A673 (cell line): ENCODE measurements at regions of chr11 and their contacts with region 1.

Region 1: GRCh38 chr11:26297189-26297975 is 34.5 kb upstream of the ANO3 start:
- DNase-seq: peak; percentile 80
- H3K4me3 ChIP-seq: no peak overlapping the region
- H3K27ac ChIP-seq: no peak overlapping the region
- H3K4me1 ChIP-seq: no peaks in the 10 kb centered on the region
- H3K27me3 ChIP-seq: peaks cover 6% of the 10 kb centered on the region
- CTCF ChIP-seq: peak; percentile 75

Region 2: DNA sequence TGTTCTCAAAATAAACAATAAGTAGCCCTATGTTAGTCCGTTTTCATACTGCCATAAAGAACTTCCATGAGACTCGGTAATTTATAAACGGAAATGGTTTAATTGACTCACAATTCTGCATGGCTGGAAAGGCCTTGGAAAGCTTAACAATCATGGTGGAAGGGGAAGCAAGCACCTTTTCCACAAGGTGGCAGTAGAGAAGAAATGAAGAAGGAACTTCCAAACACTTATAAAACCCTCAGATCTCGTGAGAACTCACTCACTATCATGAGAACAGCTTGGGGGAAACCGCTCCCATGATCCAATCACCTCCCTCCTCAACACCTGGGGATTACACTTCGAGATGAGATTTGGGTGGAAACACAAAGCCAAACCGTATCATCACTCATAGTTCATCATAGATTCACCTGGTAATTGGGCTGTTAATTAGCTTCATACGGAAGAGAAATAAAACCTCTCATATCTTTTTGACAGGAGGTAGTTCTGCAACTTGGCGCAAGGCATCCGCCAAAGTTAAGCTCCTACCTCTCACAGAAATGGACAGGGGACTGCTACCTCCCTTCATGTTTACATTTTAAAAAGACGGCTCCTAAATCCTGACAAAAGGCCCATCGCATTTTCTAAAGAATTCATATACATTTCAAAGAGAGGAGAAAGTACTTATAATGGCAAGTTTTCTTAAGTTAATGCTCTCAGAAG is 225.7 kb after region 1 on chr11:
- CTCF ChIA-PET with region 1: no interaction called
- POLR2A ChIA-PET with region 1: no interaction called
- intact Hi-C with region 1: loop called (anchors 10 kb)
- DNase-seq: peak; percentile 74
- H3K4me3 ChIP-seq: no peak overlapping the region
- H3K27ac ChIP-seq: no peak overlapping the region
- H3K4me1 ChIP-seq: no peaks in the 10 kb centered on the region
- H3K27me3 ChIP-seq: peaks cover 13% of the 10 kb centered on the region
- CTCF ChIP-seq: peak; percentile 56

Region 3: GRCh38 chr11:26649884-26650283 is 352.5 kb after region 1 on chr11:
- CTCF ChIA-PET with region 1: no interaction called
- POLR2A ChIA-PET with region 1: no interaction called
- intact Hi-C with region 1: loop called (anchors 5 kb)
- DNase-seq: peak; percentile 97
- H3K4me3 ChIP-seq: no peak overlapping the region
- H3K27ac ChIP-seq: no peak overlapping the region
- H3K4me1 ChIP-seq: no peaks in the 10 kb centered on the region
- H3K27me3 ChIP-seq: peaks cover 86% of the 10 kb centered on the region
- CTCF ChIP-seq: peak; percentile 100

Region 4: DNA sequence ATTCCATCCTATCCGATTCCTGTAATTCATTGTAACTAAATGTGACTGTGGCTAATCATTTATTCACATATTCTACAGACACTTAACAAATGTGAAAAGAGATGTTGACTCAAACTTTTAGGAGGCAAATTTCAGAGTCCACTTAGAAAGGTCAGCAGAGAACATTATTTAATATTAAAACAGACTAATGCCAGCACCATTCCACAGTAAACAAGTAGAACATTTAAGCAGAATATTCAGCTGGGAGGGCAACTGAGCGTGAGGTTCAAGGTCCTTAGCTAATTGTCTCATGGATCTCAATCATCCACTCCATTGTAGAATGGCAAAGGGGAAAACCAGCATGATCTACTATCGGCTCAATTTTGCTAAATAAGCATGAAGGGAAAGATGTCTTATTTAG is 429.6 kb after region 1 on chr11:
- CTCF ChIA-PET with region 1: no interaction called
- POLR2A ChIA-PET with region 1: no interaction called
- intact Hi-C with region 1: loop called (anchors 5 kb)
- DNase-seq: no peak
- H3K4me3 ChIP-seq: no peak overlapping the region
- H3K27ac ChIP-seq: no peak overlapping the region
- H3K4me1 ChIP-seq: no peaks in the 10 kb centered on the region
- H3K27me3 ChIP-seq: peaks cover 35% of the 10 kb centered on the region
- CTCF ChIP-seq: no peak

Region 5: GRCh38 chr11:26753723-26754504 is 456.5 kb after region 1 on chr11:
- CTCF ChIA-PET with region 1: no interaction called
- POLR2A ChIA-PET with region 1: no interaction called
- intact Hi-C with region 1: loop called (anchors 2 kb)
- DNase-seq: peak; percentile 89
- H3K4me3 ChIP-seq: no peak overlapping the region
- H3K27ac ChIP-seq: no peak overlapping the region
- H3K4me1 ChIP-seq: no peaks in the 10 kb centered on the region
- H3K27me3 ChIP-seq: peaks cover 74% of the 10 kb centered on the region
- CTCF ChIP-seq: peak; percentile 100

Region 6: GRCh38 chr11:27158722-27159679 is 861.6 kb after region 1 on chr11:
- CTCF ChIA-PET with region 1: no interaction called
- POLR2A ChIA-PET with region 1: no interaction called
- intact Hi-C with region 1: loop called (anchors 5 kb)
- DNase-seq: peak; percentile 94
- H3K4me3 ChIP-seq: no peak overlapping the region
- H3K27ac ChIP-seq: no peak overlapping the region
- H3K4me1 ChIP-seq: no peaks in the 10 kb centered on the region
- H3K27me3 ChIP-seq: peaks cover 3% of the 10 kb centered on the region
- CTCF ChIP-seq: peak; percentile 99